MCF 10A (cell line): ENCODE measurements at regions of chr14 and their contacts with region 1.

Region 1: GRCh38 chr14:69766984-69767368 is at the start of gene SRSF5:
- DNase-seq: peak; percentile 97
- H3K4me3 Mint-ChIP-seq: peak within 1 kb of the TSS; percentile 92
- H3K27ac Mint-ChIP-seq: peak within 1 kb of the TSS; percentile 100
- H3K4me1 Mint-ChIP-seq: peaks cover 14% of the 10 kb centered on the region
- H3K27me3 Mint-ChIP-seq: no peaks in the 10 kb centered on the region
- CTCF ChIP-seq: no peak
- total RNA-seq, gene SRSF5: 281 and 316 TPM in 2 replicates

Region 2: GRCh38 chr14:69580009-69580577 is 186.9 kb before region 1 on chr14:
- CTCF ChIA-PET with region 1: interaction called, 3 read pairs
- POLR2A ChIA-PET with region 1: interaction called, 12 read pairs
- intact Hi-C with region 1: no loop called
- DNase-seq: peak; percentile 90
- H3K4me3 Mint-ChIP-seq: no peak overlapping the region
- H3K27ac Mint-ChIP-seq: peak overlapping the region; percentile 32
- H3K4me1 Mint-ChIP-seq: peaks cover 18% of the 10 kb centered on the region
- H3K27me3 Mint-ChIP-seq: peaks cover 17% of the 10 kb centered on the region
- CTCF ChIP-seq: peak; percentile 49

Region 3: GRCh38 chr14:69715725-69716477 is 51.1 kb before region 1 on chr14:
- CTCF ChIA-PET with region 1: no interaction called
- POLR2A ChIA-PET with region 1: interaction called, 11 read pairs
- intact Hi-C with region 1: no loop called
- DNase-seq: peak; percentile 98
- H3K4me3 Mint-ChIP-seq: peak overlapping the region; percentile 21
- H3K27ac Mint-ChIP-seq: peak overlapping the region; percentile 61
- H3K4me1 Mint-ChIP-seq: peaks cover 48% of the 10 kb centered on the region
- H3K27me3 Mint-ChIP-seq: no peaks in the 10 kb centered on the region
- CTCF ChIP-seq: no peak

Region 4: DNA sequence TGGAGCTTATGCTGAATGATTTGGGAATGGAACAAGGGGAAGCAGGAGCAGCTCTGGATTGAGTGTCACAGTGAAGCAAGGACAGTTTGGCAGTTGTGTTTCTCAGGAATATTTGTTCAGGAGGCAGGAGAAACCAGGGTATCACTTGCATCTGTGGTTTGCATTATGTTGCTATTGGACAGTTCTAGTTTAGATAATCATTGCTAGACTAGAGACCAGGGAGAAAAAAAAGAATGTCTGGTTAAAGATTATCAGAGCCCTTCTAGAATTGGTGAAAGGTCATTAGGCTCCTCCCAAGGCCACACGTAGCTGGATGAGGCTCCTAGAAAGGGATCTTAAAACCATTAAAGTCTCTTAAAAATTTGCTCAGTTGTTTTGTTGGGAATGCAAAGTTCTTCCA is 17.0 kb before region 1 on chr14:
- CTCF ChIA-PET with region 1: no interaction called
- POLR2A ChIA-PET with region 1: interaction called, 15 read pairs
- intact Hi-C with region 1: no loop called
- DNase-seq: no peak
- H3K4me3 Mint-ChIP-seq: no peak overlapping the region
- H3K27ac Mint-ChIP-seq: no peak overlapping the region
- H3K4me1 Mint-ChIP-seq: no peaks in the 10 kb centered on the region
- H3K27me3 Mint-ChIP-seq: no peaks in the 10 kb centered on the region
- CTCF ChIP-seq: no peak

Region 5: DNA sequence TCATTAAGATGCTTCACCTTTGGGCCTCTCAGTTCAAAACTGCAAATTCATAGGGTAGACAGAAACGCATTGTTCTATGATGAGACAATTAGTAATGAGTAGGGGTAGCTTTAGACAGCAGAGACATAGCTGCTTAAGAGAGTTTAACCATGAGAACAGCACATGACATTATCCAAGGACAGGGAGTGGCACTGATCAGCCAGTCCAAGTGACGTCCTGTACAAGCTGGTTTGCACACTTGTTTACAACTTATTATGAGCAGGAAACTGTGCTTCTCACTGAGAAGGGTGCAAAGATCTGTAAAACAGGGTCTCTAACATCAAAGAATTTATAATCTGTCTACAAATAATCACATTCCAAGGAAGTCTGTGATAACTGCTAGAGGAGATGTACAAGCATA is 11.2 kb before region 1 on chr14:
- CTCF ChIA-PET with region 1: no interaction called
- POLR2A ChIA-PET with region 1: interaction called, 15 read pairs
- intact Hi-C with region 1: no loop called
- DNase-seq: no peak
- H3K4me3 Mint-ChIP-seq: no peak overlapping the region
- H3K27ac Mint-ChIP-seq: no peak overlapping the region
- H3K4me1 Mint-ChIP-seq: no peaks in the 10 kb centered on the region
- H3K27me3 Mint-ChIP-seq: no peaks in the 10 kb centered on the region
- CTCF ChIP-seq: no peak

Region 6: GRCh38 chr14:69779088-69779487 is 12.1 kb after region 1 on chr14:
- CTCF ChIA-PET with region 1: no interaction called
- POLR2A ChIA-PET with region 1: interaction called, 19 read pairs
- intact Hi-C with region 1: no loop called
- DNase-seq: no peak
- H3K4me3 Mint-ChIP-seq: no peak overlapping the region
- H3K27ac Mint-ChIP-seq: no peak overlapping the region
- H3K4me1 Mint-ChIP-seq: no peaks in the 10 kb centered on the region
- H3K27me3 Mint-ChIP-seq: no peaks in the 10 kb centered on the region
- CTCF ChIP-seq: no peak